Endothelial cell of umbilical vein (primary cell): ENCODE measurements at regions of chr3 and their contacts with region 1.

Region 1: GRCh38 chr3:190053919-190054672 is 66.6 kb downstream of the P3H2 start:
- DNase-seq: peak; percentile 34
- H3K4me3 ChIP-seq: no peak overlapping the region
- H3K27ac ChIP-seq: peak overlapping the region; percentile 4
- H3K4me1 ChIP-seq: peaks cover 13% of the 10 kb centered on the region
- H3K27me3 ChIP-seq: no peaks in the 10 kb centered on the region
- CTCF ChIP-seq: no peak
- POLR2A ChIP-seq: no peak

Region 2: DNA sequence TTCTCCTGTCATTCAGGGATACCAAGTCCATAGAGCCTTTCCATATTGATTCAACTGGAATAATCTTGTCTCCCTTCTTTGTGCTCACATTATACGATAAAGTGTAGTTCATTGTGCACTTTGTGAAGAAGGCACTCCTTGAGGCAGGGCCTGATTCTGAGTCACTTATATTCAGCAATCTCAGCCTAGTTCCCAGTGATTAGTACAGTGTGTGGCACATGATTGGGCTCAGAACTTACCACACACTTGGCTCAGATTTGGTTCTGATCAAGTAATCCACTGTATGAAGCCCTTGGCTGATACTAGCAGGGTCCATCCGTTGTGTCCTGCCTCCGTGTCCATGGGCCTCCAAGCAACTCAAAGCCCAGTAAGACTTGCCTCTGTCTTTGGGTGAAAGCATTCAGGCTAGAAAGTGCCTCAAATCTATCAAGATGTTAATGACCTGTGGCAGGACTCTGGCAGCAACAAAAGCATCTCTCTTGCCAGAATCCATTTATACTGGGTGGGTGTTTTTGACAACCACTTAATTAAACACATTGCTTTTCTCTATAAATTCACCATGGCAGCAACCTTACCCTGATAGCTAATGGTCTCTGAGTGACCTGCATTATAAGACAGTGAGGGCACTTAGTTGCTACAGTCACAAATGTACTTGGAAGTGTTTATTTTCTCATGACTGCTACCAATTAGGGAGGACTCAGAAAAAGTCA is 831.0 kb before region 1 on chr3:
- CTCF ChIA-PET with region 1: no interaction called
- POLR2A ChIA-PET with region 1: no interaction called
- dilution Hi-C with region 1: no loop called
- intact Hi-C with region 1: no loop called
- DNase-seq: no peak
- H3K4me3 ChIP-seq: no peak overlapping the region
- H3K27ac ChIP-seq: no peak overlapping the region
- H3K4me1 ChIP-seq: no peaks in the 10 kb centered on the region
- H3K27me3 ChIP-seq: no peaks in the 10 kb centered on the region
- CTCF ChIP-seq: no peak
- POLR2A ChIP-seq: no peak

Region 3: DNA sequence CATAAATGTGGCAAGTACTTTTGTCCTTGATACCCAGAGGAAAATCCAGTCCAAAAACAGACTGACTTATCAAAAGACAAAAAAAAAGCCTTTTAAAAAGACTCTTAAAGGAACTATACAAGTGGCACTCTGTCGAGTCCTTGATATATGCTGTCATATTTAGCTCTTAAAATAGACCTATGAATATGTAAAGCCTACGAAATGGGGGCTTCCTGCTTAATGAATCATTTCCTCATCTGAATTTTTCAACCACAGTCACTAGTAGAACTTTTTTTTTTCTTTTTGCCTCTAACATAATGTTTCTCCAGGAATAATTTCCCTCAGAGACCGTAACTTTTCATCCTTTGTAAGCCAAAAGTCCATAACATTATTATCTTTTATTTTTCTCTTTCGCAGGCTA is 29.2 kb before region 1 on chr3:
- CTCF ChIA-PET with region 1: interaction called, 3 read pairs
- POLR2A ChIA-PET with region 1: no interaction called
- dilution Hi-C with region 1: no loop called
- intact Hi-C with region 1: loop called (anchors 2 kb)
- DNase-seq: peak; percentile 76
- H3K4me3 ChIP-seq: peak overlapping the region in 1 of 3 experiments; percentile 11
- H3K27ac ChIP-seq: peak overlapping the region; percentile 90
- H3K4me1 ChIP-seq: peaks cover 12% of the 10 kb centered on the region
- H3K27me3 ChIP-seq: no peaks in the 10 kb centered on the region
- CTCF ChIP-seq: no peak
- POLR2A ChIP-seq: no peak

Region 4: DNA sequence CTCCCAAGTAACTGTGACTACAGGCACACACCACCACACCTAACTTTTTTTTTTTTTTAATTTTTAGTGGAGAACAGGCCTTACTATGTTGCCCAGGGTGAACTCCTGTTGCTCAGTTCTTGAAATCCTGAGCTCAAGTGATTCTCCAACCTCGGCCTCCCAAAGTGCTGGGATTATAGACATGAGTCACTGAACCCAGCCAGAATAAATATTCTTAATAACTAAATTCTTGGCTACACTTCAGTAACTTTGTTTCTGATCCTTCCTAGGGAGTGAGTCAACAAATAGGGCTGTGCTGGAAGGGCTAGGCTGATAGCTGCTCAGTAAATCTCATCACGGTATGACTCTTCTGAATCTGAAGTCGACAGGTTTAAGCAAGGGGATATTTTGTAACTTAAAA is 10.0 kb after region 1 on chr3:
- CTCF ChIA-PET with region 1: interaction called, 12 read pairs
- POLR2A ChIA-PET with region 1: no interaction called
- dilution Hi-C with region 1: no loop called
- intact Hi-C with region 1: no loop called
- DNase-seq: peak; percentile 82
- H3K4me3 ChIP-seq: no peak overlapping the region
- H3K27ac ChIP-seq: no peak overlapping the region
- H3K4me1 ChIP-seq: peaks cover 11% of the 10 kb centered on the region
- H3K27me3 ChIP-seq: no peaks in the 10 kb centered on the region
- CTCF ChIP-seq: no peak
- POLR2A ChIP-seq: no peak